Activated CD4-positive, alpha-beta T cell treated with anti-CD3 and anti-CD28 coated beads, Interleukin-2, amount 10 ng/mL, durations not matched to agents 24 days and 14 days (primary cell): ENCODE measurements at regions of chr7 and their contacts with region 1.

Region 1: GRCh38 chr7:31488562-31489203 is 25.2 kb upstream of the ITPRID1 start:
- DNase-seq: peak; percentile 80
- H3K4me3 Mint-ChIP-seq: no peak overlapping the region
- H3K27ac Mint-ChIP-seq: no peak overlapping the region
- H3K4me1 Mint-ChIP-seq: no peaks in the 10 kb centered on the region
- H3K27me3 Mint-ChIP-seq: no peaks in the 10 kb centered on the region

Region 2: GRCh38 chr7:31443457-31443856 is 45.2 kb before region 1 on chr7:
- intact Hi-C with region 1: loop called (anchors 1 kb)
- DNase-seq: peak; percentile 61
- H3K4me3 Mint-ChIP-seq: no peak overlapping the region
- H3K27ac Mint-ChIP-seq: no peak overlapping the region
- H3K4me1 Mint-ChIP-seq: no peaks in the 10 kb centered on the region
- H3K27me3 Mint-ChIP-seq: no peaks in the 10 kb centered on the region

Region 3: GRCh38 chr7:31476073-31476745 is 12.5 kb before region 1 on chr7:
- intact Hi-C with region 1: no loop called
- DNase-seq: no peak
- H3K4me3 Mint-ChIP-seq: no peak overlapping the region
- H3K27ac Mint-ChIP-seq: no peak overlapping the region
- H3K4me1 Mint-ChIP-seq: no peaks in the 10 kb centered on the region
- H3K27me3 Mint-ChIP-seq: no peaks in the 10 kb centered on the region

Region 4: GRCh38 chr7:31500656-31501055 is 12.0 kb after region 1 on chr7:
- intact Hi-C with region 1: no loop called
- DNase-seq: no peak
- H3K4me3 Mint-ChIP-seq: no peak overlapping the region
- H3K27ac Mint-ChIP-seq: no peak overlapping the region
- H3K4me1 Mint-ChIP-seq: no peaks in the 10 kb centered on the region
- H3K27me3 Mint-ChIP-seq: no peaks in the 10 kb centered on the region